ENCODE measurements at regions of chr1 and their contacts with region 1.

Region 1: DNA sequence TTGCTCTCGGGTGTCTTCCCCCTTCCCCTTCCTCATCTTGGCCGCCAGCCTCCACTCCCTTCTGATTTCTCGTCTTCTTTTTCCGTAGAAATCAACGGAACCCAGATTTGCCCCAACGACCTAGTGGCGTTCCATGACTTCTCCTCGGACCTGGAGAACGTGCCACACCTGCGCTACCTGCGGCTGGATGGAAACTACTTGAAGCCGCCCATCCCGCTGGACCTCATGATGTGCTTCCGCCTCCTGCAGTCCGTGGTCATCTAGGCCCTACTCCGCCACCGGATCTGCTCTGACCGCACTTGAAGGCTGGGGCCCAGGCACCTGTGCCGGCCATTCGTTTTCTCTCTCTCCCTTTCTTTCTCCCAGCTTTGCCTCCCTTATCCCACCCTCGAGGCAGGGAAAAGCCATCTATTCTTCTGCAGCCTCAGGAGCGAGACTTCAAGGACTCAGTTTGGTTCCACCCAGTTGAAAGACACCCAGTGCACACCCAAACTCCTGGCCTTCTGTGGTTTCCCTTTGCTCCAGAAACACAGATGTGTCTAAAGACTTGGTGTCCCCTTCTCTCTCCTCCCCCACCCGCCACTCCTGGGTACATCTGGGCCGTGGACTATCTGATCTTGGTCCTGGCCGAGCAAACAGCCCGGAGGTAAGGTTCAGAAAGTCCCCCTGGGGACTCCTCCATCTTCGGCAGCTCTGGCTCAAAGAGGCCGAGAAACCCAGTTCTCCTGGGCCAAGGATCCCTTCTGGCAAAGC is 7.2 kb upstream of the OPTC start:
- DNase-seq: no peak
- H3K27ac ChIP-seq: peak overlapping the region; percentile 38; the same call in 1 of the 2 replicates
- CTCF ChIP-seq: no peak

Region 2: GRCh38 chr1:203273206-203273868 is 213.5 kb before region 1 on chr1:
- CTCF ChIA-PET with region 1: interaction called, 43 read pairs
- POLR2A ChIA-PET with region 1: no interaction called
- DNase-seq: peak; percentile 89
- H3K27ac ChIP-seq: peak overlapping the region; percentile 55
- CTCF ChIP-seq: peak; percentile 98

Region 3: GRCh38 chr1:203422656-203423055 is 64.1 kb before region 1 on chr1:
- CTCF ChIA-PET with region 1: no interaction called
- POLR2A ChIA-PET with region 1: no interaction called
- DNase-seq: no peak
- H3K27ac ChIP-seq: no peak overlapping the region
- CTCF ChIP-seq: no peak

Region 4: GRCh38 chr1:203447151-203447550 is 39.6 kb before region 1 on chr1:
- CTCF ChIA-PET with region 1: interaction called, 11 read pairs
- POLR2A ChIA-PET with region 1: no interaction called
- DNase-seq: no peak
- H3K27ac ChIP-seq: no peak overlapping the region
- CTCF ChIP-seq: no peak

Region 5: GRCh38 chr1:203475012-203475981 is 11.5 kb before region 1 on chr1 and contains the start of gene PRELP:
- CTCF ChIA-PET with region 1: interaction called, 13 read pairs
- POLR2A ChIA-PET with region 1: no interaction called
- DNase-seq: peak; percentile 64
- H3K27ac ChIP-seq: no peak within 1 kb of the TSS
- CTCF ChIP-seq: no peak

Region 6: GRCh38 chr1:203504397-203505250 is 17.8 kb after region 1 on chr1:
- CTCF ChIA-PET with region 1: interaction called, 25 read pairs
- POLR2A ChIA-PET with region 1: no interaction called
- DNase-seq: peak; percentile 93
- H3K27ac ChIP-seq: no peak overlapping the region
- CTCF ChIP-seq: peak; percentile 79